CD8-positive, alpha-beta T cell (primary cell): ENCODE measurements at regions of chr10 and their contacts with region 1.

Region 1: GRCh38 chr10:125868372-125868975 is 12.6 kb downstream of the DHX32 start:
- DNase-seq: peak in 3 of 9 experiments; percentile 16 to 53 (median 40)
- ATAC-seq: peak; percentile 34
- H3K4me3 ChIP-seq: no peak overlapping the region
- H3K4me3 Mint-ChIP-seq: no peak overlapping the region
- H3K27ac ChIP-seq: no peak overlapping the region
- H3K27ac Mint-ChIP-seq: no peak overlapping the region
- H3K4me1 ChIP-seq: no peaks in the 10 kb centered on the region
- H3K4me1 Mint-ChIP-seq: no peaks in the 10 kb centered on the region
- H3K27me3 ChIP-seq: no peaks in the 10 kb centered on the region
- H3K27me3 Mint-ChIP-seq: no peaks in the 10 kb centered on the region
- CTCF ChIP-seq: peak; percentile 84

Region 2: GRCh38 chr10:125684581-125684980 is 183.9 kb before region 1 on chr10:
- CTCF ChIA-PET with region 1: no interaction called
- POLR2A ChIA-PET with region 1: no interaction called
- intact Hi-C with region 1: no loop called
- DNase-seq: no peak
- ATAC-seq: no peak
- H3K4me3 ChIP-seq: no peak overlapping the region
- H3K4me3 Mint-ChIP-seq: no peak overlapping the region
- H3K27ac ChIP-seq: no peak overlapping the region
- H3K27ac Mint-ChIP-seq: no peak overlapping the region
- H3K4me1 ChIP-seq: no peaks in the 10 kb centered on the region
- H3K4me1 Mint-ChIP-seq: no peaks in the 10 kb centered on the region
- H3K27me3 ChIP-seq: peaks cover 0 to 5% of the 10 kb centered on the region in 2 experiments
- H3K27me3 Mint-ChIP-seq: peaks cover 21% of the 10 kb centered on the region
- CTCF ChIP-seq: no peak

Region 3: GRCh38 chr10:125857185-125857750 is 11.2 kb before region 1 on chr10:
- CTCF ChIA-PET with region 1: interaction called, 13 read pairs
- POLR2A ChIA-PET with region 1: no interaction called
- intact Hi-C with region 1: no loop called
- DNase-seq: no peak
- ATAC-seq: no peak
- H3K4me3 ChIP-seq: no peak overlapping the region
- H3K4me3 Mint-ChIP-seq: no peak overlapping the region
- H3K27ac ChIP-seq: no peak overlapping the region
- H3K27ac Mint-ChIP-seq: no peak overlapping the region
- H3K4me1 ChIP-seq: no peaks in the 10 kb centered on the region
- H3K4me1 Mint-ChIP-seq: no peaks in the 10 kb centered on the region
- H3K27me3 ChIP-seq: no peaks in the 10 kb centered on the region
- H3K27me3 Mint-ChIP-seq: no peaks in the 10 kb centered on the region
- CTCF ChIP-seq: no peak

Region 4: GRCh38 chr10:126017961-126018560 is 149.6 kb after region 1 on chr10:
- CTCF ChIA-PET with region 1: no interaction called
- POLR2A ChIA-PET with region 1: no interaction called
- intact Hi-C with region 1: no loop called
- DNase-seq: no peak
- ATAC-seq: no peak
- H3K4me3 ChIP-seq: no peak overlapping the region
- H3K4me3 Mint-ChIP-seq: no peak overlapping the region
- H3K27ac ChIP-seq: no peak overlapping the region
- H3K27ac Mint-ChIP-seq: no peak overlapping the region
- H3K4me1 ChIP-seq: no peaks in the 10 kb centered on the region
- H3K4me1 Mint-ChIP-seq: no peaks in the 10 kb centered on the region
- H3K27me3 ChIP-seq: no peaks in the 10 kb centered on the region
- H3K27me3 Mint-ChIP-seq: peaks cover 9% of the 10 kb centered on the region
- CTCF ChIP-seq: no peak

Region 5: GRCh38 chr10:126097558-126098225 is 229.2 kb after region 1 on chr10:
- CTCF ChIA-PET with region 1: no interaction called
- POLR2A ChIA-PET with region 1: no interaction called
- intact Hi-C with region 1: loop called in 1 of 2 experiments (anchors 2 kb)
- DNase-seq: peak in 2 of 9 experiments; percentile 17
- ATAC-seq: no peak
- H3K4me3 ChIP-seq: no peak overlapping the region
- H3K4me3 Mint-ChIP-seq: no peak overlapping the region
- H3K27ac ChIP-seq: no peak overlapping the region
- H3K27ac Mint-ChIP-seq: no peak overlapping the region
- H3K4me1 ChIP-seq: no peaks in the 10 kb centered on the region
- H3K4me1 Mint-ChIP-seq: no peaks in the 10 kb centered on the region
- H3K27me3 ChIP-seq: no peaks in the 10 kb centered on the region
- H3K27me3 Mint-ChIP-seq: no peaks in the 10 kb centered on the region
- CTCF ChIP-seq: no peak

Region 6: DNA sequence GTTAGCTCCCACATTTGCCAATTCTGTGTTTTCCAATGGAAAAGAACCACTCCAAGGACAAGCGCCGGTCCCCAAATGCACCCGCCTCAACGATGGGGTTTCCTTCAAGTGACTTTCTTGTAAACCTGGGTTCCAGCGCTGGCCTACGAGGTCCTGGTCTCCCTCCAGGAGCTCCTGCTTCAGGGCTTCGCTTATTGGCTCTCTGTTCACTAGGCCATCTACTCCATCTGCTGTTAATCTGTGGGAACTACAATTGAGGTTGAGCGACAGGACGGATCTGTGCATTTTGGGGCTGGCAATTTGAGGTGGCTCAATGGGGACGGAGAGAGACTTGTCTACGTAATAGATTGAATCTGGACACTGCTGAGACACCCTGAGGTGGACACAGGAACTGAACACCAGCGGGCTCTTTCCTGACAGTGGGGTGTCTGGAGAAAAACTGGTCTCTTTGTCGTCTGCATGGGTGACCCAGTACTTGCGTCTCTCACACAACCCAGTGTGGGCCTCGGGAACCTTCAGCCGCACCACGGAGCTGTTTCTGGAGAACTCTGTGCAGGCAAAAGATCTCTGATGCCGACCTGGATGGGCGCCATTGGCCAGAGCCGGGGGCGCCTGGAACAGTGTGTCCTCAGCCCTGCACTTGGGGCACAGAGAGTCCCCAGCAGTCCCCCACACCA is 635.7 kb after region 1 on chr10:
- CTCF ChIA-PET with region 1: no interaction called
- POLR2A ChIA-PET with region 1: no interaction called
- intact Hi-C with region 1: loop called in 1 of 2 experiments (anchors 10 kb)
- DNase-seq: peak in 2 of 9 experiments; percentile 29 to 33
- ATAC-seq: no peak
- H3K4me3 ChIP-seq: no peak overlapping the region
- H3K4me3 Mint-ChIP-seq: no peak overlapping the region
- H3K27ac ChIP-seq: no peak overlapping the region
- H3K27ac Mint-ChIP-seq: no peak overlapping the region
- H3K4me1 ChIP-seq: no peaks in the 10 kb centered on the region
- H3K4me1 Mint-ChIP-seq: no peaks in the 10 kb centered on the region
- H3K27me3 ChIP-seq: no peaks in the 10 kb centered on the region
- H3K27me3 Mint-ChIP-seq: no peaks in the 10 kb centered on the region
- CTCF ChIP-seq: no peak

Region 7: DNA sequence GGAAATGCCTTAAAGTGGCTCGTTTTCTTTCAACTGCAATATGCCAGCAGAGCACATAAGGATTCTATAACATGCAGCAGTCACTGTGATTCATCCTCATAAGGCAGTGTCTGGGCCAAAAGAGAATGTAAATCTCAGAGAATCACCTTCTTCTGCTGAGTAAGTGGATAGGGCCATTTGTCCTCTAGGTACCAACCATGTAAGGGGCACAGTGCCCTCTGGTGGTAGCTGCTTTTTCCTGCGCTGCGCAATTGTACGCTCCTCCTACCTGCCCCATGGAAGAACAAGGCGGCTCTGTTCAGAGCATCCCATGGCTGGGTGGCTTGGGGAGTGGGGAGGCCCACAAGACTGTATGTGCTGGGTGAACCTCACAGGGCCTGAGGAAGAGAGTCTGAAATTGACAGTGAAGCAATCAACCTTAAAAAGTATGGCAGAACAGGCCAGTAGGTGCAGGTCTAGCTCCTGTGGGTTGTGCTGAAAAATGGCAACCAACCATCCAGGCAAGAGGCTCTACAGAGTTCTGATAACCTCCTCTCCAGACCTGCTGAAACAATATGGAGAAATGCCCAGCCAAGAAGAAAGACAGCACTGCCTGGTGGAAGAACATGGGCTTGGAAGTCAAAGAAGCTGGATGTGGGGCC is 880.7 kb after region 1 on chr10:
- CTCF ChIA-PET with region 1: no interaction called
- POLR2A ChIA-PET with region 1: no interaction called
- intact Hi-C with region 1: loop called in 1 of 2 experiments (anchors 5 kb)
- DNase-seq: peak in 7 of 9 experiments; percentile 1 to 37 (median 22)
- ATAC-seq: no peak
- H3K4me3 ChIP-seq: no peak overlapping the region
- H3K4me3 Mint-ChIP-seq: no peak overlapping the region
- H3K27ac ChIP-seq: no peak overlapping the region
- H3K27ac Mint-ChIP-seq: no peak overlapping the region
- H3K4me1 ChIP-seq: no peaks in the 10 kb centered on the region
- H3K4me1 Mint-ChIP-seq: no peaks in the 10 kb centered on the region
- H3K27me3 ChIP-seq: no peaks in the 10 kb centered on the region
- H3K27me3 Mint-ChIP-seq: no peaks in the 10 kb centered on the region
- CTCF ChIP-seq: no peak